Activated CD4-positive, alpha-beta T cell treated with anti-CD3 and anti-CD28 coated beads for 36 hours (primary cell): ENCODE measurements at regions of chr20 and their contacts with region 1.

Region 1: DNA sequence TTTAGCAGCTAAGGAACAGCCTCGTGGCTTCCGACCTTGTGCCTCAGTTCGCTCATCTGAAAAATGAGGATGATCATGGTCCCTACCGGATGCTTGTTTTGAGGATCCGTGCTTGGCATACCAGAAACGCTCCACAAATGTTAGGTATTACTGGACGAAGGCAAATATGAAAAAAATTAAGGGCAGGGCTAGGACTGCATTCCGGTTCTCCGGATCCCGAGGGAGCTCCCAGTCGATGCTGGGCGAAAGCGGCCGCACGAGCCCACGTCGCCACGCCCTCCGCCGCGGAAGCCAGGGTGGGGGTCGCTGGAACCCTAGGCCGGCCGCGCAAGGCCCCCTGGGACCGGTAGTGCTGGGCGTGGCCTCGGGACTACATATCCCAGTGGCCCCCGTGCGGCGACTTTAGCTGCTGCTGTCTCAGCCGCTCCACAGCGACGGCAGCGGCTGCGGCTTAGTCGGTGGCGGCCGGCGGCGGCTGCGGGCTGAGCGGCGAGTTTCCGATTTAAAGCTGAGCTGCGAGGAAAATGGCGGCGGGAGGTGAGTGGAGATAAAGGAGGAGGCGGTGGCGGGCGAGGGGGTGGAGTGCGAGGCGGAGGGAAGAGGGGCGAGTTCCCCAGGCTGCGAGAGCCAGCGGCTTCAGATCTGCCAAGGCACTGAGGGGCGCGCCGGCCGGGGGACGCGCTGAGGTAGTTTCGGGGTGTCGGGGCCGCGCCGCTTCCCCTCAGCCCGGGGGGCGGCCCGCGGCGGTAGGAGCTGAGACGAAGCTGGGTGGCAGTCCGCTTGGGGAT is at the start of gene NCOA3:
- DNase-seq: peak; percentile 98
- ATAC-seq: peak; percentile 82
- H3K4me3 Mint-ChIP-seq: peak within 1 kb of the TSS; percentile 99
- H3K27ac Mint-ChIP-seq: peak within 1 kb of the TSS; percentile 95
- H3K4me1 Mint-ChIP-seq: peaks cover 58% of the 10 kb centered on the region
- H3K27me3 Mint-ChIP-seq: no peaks in the 10 kb centered on the region
- total RNA-seq, gene NCOA3: 76.4 to 83.4 TPM

Region 2: DNA sequence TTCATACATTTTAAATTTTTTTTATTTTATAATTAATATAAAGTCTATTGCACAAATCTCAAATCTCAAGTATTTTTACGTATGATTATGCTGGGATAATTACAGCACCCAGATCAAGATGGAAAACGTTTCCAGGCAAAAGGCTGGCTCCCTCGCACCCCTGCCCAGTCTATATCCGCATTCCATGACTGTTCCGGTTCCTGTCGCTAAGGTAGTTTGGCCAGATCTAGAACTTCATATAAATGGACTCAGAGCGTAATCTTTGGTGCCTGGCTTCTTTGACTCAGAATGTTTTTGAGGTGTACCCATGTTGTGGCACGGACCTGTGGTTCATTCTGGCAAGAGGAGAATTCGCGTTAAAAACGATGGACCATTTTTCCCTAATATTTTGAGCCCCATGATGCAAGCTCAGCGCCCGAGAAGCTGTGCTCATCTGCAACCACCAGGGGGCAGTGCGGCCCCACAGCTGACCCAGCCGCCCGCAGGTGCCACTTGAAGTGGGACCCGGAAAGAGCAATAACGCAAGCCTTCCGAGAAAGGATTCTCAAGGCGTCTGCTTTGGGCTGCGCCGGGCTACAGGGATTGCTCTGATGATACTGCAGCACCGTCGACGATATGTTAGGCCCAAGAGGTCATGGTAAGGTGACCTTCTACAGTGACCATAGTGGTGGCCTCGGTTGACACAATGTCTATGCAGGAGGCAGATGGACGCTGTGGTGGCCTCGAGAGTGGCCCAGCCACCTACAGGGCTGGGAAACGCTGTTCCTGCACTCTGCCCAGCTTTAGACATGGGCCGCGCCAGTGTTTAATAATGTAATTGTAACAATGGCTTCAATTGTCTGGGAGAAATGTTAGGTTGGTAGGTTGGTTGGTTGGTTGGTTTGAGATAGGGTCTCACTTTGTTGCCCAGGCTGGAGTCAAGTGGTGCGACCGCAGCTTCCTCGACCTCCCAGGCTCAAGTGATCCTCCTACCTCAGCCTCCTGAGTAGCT is 305.3 kb before region 1 on chr20:
- CTCF ChIA-PET with region 1: no interaction called
- POLR2A ChIA-PET with region 1: no interaction called
- intact Hi-C with region 1: loop called (anchors 5 kb)
- DNase-seq: peak; percentile 91
- ATAC-seq: peak; percentile 57
- H3K4me3 Mint-ChIP-seq: no peak overlapping the region
- H3K27ac Mint-ChIP-seq: no peak overlapping the region
- H3K4me1 Mint-ChIP-seq: peaks cover 16% of the 10 kb centered on the region
- H3K27me3 Mint-ChIP-seq: peaks cover 8% of the 10 kb centered on the region

Region 3: GRCh38 chr20:47453142-47453782 is 48.4 kb before region 1 on chr20:
- CTCF ChIA-PET with region 1: interaction called, 4 read pairs
- POLR2A ChIA-PET with region 1: interaction called, 4 read pairs
- intact Hi-C with region 1: loop called (anchors 1 kb)
- DNase-seq: peak; percentile 74
- ATAC-seq: peak; percentile 84
- H3K4me3 Mint-ChIP-seq: no peak overlapping the region
- H3K27ac Mint-ChIP-seq: peak overlapping the region; percentile 73
- H3K4me1 Mint-ChIP-seq: peaks cover 38% of the 10 kb centered on the region
- H3K27me3 Mint-ChIP-seq: no peaks in the 10 kb centered on the region

Region 4: DNA sequence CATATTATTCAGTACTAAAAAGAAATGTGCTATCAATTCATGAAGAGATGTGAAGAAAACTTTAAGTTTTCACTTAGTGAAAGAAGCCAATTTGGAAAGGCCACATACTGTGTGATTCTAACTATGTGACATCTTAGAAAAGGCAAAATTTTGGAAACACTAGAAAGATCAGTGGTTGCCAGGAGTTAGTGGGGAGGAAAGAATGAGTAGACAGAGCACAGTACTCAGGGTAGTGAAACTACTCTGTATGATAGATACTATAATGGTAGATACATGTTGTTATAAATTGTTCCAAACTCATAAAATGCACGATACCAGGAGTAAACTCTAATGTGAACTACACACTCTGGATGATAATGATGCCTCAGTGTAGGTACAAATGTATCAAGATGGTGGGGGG is 14.2 kb after region 1 on chr20:
- CTCF ChIA-PET with region 1: interaction called, 6 read pairs
- POLR2A ChIA-PET with region 1: interaction called, 10 read pairs
- intact Hi-C with region 1: loop called in 1 of 2 experiments (anchors 2 kb)
- DNase-seq: no peak
- ATAC-seq: peak; percentile 88
- H3K4me3 Mint-ChIP-seq: peak overlapping the region; percentile 5
- H3K27ac Mint-ChIP-seq: peak overlapping the region; percentile 89
- H3K4me1 Mint-ChIP-seq: peaks cover 65% of the 10 kb centered on the region
- H3K27me3 Mint-ChIP-seq: no peaks in the 10 kb centered on the region

Region 5: DNA sequence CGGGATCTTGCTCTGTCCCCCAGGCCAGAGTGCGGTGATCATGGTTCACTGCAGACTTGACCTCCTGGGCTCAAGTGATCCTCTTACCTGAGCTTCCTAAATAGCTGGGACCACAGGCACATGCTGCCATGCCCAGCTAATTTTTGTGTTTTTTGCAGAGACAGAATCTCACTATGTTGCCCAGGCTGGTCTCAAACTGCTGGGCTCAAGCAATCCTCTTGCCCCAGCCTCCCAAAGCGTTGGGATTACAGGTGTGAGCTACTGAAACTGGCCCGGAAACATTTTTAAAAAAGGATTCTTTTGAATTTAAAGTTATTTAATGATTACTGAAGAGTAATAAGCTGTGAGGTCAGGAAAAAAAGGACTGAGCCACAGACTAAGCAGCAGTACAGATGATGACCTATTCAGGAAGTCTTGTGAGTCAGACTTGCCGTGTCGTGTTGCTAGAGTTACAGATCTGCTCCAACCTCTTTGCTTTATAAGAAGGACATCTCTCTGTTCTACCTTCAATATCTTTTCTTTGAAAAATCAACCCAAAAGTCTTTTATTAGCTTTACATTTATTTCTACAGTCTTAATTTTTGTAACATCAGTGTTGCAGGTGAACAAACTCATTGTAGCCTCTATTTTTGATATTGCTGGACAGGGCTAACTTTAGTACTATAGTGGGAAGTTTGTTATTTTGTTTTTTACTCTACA is 108.7 kb after region 1 on chr20:
- CTCF ChIA-PET with region 1: interaction called, 4 read pairs
- POLR2A ChIA-PET with region 1: interaction called, 4 read pairs
- intact Hi-C with region 1: loop called (anchors 2 to 5 kb)
- DNase-seq: peak; percentile 93
- ATAC-seq: peak; percentile 90
- H3K4me3 Mint-ChIP-seq: peak overlapping the region; percentile 46
- H3K27ac Mint-ChIP-seq: peak overlapping the region; percentile 90
- H3K4me1 Mint-ChIP-seq: peaks cover 82% of the 10 kb centered on the region
- H3K27me3 Mint-ChIP-seq: no peaks in the 10 kb centered on the region

Region 6: DNA sequence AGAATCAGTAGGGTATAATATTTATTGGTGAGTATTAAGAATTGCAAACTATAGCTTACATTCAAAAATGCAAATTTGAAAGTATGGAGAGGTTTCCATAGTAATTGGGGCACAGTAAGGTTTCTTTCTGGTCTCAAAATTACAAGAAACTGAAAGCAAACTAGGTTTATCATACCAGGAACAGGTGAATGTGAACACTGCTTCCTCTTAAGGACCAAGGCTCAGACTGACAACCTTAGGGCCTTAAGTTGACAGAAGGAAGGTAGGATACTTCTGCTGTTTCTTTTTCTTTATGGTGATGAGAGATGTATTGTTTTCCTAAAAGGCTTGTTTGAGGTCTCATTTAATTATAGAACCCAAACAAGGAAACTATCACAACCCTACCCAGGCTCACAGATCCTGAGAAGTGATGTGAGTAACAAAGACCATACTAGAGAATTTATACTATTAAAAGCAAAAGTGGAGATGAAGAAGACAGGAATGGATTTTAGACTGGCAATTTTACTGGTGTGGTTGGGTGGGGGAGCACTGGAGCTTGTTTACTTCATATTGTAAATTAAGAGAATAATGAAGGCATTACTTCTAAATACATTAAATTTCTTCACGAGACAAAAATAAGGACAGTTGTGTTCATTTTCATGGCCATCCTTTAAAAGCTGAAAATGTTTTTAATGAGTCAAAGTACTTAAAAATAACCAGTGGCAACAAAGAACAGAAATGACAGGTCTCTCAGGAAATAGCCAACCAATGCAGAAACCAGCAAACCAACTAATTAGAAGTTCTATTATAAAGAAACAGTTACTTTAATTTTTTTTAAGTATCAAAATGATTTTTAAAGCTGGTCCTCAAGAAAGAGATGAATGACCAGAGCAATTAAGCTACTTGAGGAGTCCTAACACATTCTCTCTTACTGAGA is 1665.1 kb after region 1 on chr20:
- CTCF ChIA-PET with region 1: no interaction called
- POLR2A ChIA-PET with region 1: no interaction called
- intact Hi-C with region 1: loop called in 1 of 2 experiments (anchors 10 kb)
- DNase-seq: no peak
- ATAC-seq: peak; percentile 79
- H3K4me3 Mint-ChIP-seq: peak overlapping the region; percentile 37
- H3K27ac Mint-ChIP-seq: peak overlapping the region; percentile 85
- H3K4me1 Mint-ChIP-seq: peaks cover 74% of the 10 kb centered on the region
- H3K27me3 Mint-ChIP-seq: no peaks in the 10 kb centered on the region